ENCODE measurements at regions of chr5 and their contacts with region 1.

Region 1: DNA sequence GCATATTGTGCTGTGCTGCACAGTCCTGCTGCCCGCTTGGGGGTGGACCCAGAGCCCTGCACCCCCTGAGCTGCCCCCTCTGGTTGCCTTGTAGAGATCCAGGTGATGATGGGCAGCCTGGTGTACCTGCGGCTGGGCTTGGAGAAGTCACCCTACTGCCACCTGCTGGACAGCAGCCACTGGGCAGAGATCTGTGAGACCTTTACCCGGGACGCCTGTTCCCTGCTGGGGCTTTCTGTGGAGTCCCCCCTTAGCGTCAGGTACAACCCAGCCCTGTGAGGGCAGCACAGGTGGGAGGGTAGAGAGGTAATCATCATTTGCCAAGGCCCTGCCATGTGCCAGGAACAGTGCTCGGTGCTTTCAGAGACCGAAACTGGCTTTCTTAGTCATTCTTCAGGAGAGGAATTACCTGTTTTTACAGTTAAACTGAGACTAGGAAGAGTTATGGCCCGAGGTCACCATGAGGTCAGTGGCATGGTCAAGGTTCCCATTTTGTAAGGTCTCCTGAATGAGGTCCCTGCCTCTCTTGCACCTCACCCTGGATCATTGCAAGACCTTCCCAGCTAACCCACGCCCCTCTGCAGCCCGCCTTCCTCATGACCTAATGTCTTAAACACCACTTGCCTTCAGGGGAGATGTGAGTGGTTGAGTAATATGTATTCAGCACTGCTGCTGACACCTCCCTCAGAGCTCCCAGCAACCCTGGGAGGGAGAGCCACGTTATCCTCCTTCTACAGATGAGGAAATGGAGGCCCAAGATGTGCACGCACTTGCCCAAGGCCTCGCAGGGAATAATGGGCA is 7.5 kb downstream of the NHP2 start:
- DNase-seq: peak; percentile 50
- H3K4me3 ChIP-seq: no peak overlapping the region
- H3K27ac ChIP-seq: no peak overlapping the region
- H3K4me1 ChIP-seq: no peaks in the 10 kb centered on the region
- H3K27me3 ChIP-seq: no peaks in the 10 kb centered on the region
- CTCF ChIP-seq: peak; percentile 78 to 86
- POLR2A ChIP-seq: peak; percentile 18

Region 2: DNA sequence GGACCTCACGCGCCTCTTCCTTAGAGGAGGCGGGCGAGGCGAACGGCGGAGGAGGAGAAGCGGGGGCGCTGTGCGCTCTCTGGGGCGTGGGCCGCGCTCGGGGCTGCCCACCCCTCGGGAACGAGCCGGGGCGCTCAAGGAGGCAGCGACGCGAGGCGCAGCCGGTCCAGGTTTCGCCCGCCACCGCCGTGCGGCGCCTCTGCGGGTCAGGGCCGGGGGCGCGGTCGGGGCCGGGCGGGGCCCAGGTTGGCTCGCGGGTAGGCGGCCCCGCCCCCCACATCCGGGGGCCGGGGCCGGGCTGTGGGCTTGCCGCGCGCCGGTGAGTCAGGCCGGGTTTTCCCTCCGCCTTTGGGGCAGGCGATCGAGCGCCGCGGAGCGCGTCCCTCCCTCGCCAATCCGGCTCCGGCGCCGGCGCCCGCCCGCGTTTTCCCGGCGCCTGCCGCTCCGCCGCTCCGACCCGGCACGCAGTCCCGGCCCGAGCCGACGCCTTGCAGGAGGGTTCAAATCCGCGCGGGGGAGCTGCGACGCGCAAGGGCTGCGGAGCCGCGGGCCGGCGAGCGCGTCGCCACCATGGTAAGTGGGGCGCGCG is 32.9 kb before region 1 on chr5 and contains the start of gene N4BP3:
- CTCF ChIA-PET with region 1: no interaction called
- POLR2A ChIA-PET with region 1: interaction called, 5 read pairs
- dilution Hi-C with region 1: no loop called
- intact Hi-C with region 1: loop called (anchors 2 kb)
- DNase-seq: peak; percentile 56
- H3K4me3 ChIP-seq: peak within 1 kb of the TSS; percentile 20 to 94 (median 69)
- H3K27ac ChIP-seq: no peak within 1 kb of the TSS
- H3K4me1 ChIP-seq: peaks cover 37% of the 10 kb centered on the region
- H3K27me3 ChIP-seq: no peaks in the 10 kb centered on the region
- CTCF ChIP-seq: peak; percentile 3 to 7
- POLR2A ChIP-seq: no peak
- total RNA-seq, gene N4BP3: 38.2 and 40.3 TPM in 2 replicates

Region 3: DNA sequence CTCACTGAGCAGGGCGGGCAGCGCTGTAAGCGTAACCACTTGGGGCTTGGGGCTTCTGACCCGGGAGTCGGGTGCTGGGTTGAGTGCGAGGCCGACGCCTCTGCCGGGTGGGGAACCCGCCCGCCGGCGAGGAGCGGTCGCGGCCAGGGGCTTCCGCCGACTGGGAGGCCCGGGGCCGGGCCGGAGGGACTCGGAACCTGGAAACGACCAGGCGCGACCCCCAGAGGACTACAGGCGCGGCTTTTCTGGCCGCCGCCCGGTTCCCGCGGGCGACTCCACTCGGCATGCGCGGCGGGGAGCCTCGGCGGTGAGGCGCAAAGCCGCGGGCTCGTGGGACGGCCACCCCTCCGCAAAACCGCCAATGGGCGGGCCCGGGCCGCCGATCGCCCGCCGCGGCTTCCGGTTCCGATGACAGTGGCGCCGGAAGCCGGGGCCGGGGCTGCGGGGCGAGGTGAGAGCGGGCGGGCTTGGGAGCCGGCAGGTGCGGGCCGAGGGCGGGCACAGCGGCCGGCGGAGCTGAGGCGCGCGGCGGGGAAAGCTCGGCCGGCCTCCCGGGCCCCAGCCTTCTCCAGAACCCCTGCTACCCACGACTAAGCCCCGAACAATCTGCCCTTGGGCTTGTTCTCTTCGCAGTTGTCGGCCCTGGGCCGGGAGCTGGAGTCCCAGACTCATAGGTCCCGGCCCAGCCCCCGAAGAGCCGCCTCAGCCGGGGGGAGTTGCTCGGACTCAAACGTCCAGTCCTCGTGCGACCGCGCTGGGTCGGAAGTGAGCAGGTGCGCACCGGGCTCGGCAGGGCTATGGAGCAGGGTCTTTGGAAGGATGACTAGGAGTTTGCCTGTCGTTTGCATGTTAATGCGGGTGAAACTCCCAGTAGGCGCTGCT is 15.4 kb before region 1 on chr5 and contains the start of gene RMND5B:
- CTCF ChIA-PET with region 1: interaction called, 3 read pairs
- POLR2A ChIA-PET with region 1: interaction called, 6 read pairs
- dilution Hi-C with region 1: no loop called
- intact Hi-C with region 1: loop called (anchors 2 kb)
- DNase-seq: peak; percentile 68
- H3K4me3 ChIP-seq: peak within 1 kb of the TSS; percentile 62 to 82 (median 64)
- H3K27ac ChIP-seq: peak within 1 kb of the TSS; percentile 40
- H3K4me1 ChIP-seq: peaks cover 11% of the 10 kb centered on the region
- H3K27me3 ChIP-seq: no peaks in the 10 kb centered on the region
- CTCF ChIP-seq: no peak
- POLR2A ChIP-seq: peak; percentile 70
- total RNA-seq, gene RMND5B: 34.2 and 38.2 TPM in 2 replicates

Region 4: GRCh38 chr5:178163772-178164735 is 17.8 kb after region 1 on chr5:
- CTCF ChIA-PET with region 1: interaction called, 3 read pairs
- POLR2A ChIA-PET with region 1: no interaction called
- dilution Hi-C with region 1: no loop called
- intact Hi-C with region 1: loop called (anchors 1 kb)
- DNase-seq: peak; percentile 78
- H3K4me3 ChIP-seq: no peak overlapping the region
- H3K27ac ChIP-seq: no peak overlapping the region
- H3K4me1 ChIP-seq: no peaks in the 10 kb centered on the region
- H3K27me3 ChIP-seq: peaks cover 4% of the 10 kb centered on the region in 2 experiments
- CTCF ChIP-seq: peak; percentile 95 to 99
- POLR2A ChIP-seq: no peak

Region 5: GRCh38 chr5:178232124-178232919 is 86.1 kb after region 1 on chr5 and contains the start of gene PHYKPL:
- CTCF ChIA-PET with region 1: no interaction called
- POLR2A ChIA-PET with region 1: no interaction called
- dilution Hi-C with region 1: no loop called
- intact Hi-C with region 1: no loop called
- DNase-seq: peak; percentile 71
- H3K4me3 ChIP-seq: peak within 1 kb of the TSS; percentile 49 to 90 (median 65)
- H3K27ac ChIP-seq: peak within 1 kb of the TSS; percentile 54
- H3K4me1 ChIP-seq: peaks cover 16% of the 10 kb centered on the region
- H3K27me3 ChIP-seq: no peaks in the 10 kb centered on the region
- CTCF ChIP-seq: peak in 1 of 2 donors; percentile 7
- POLR2A ChIP-seq: peak; percentile 87
- total RNA-seq, gene PHYKPL: 80.5 and 81.7 TPM in 2 replicates